PC-9 (cell line): ENCODE measurements at regions of chr16 and their contacts with region 1.

Region 1: GRCh38 chr16:90022209-90023064 is 3.2 kb upstream of the DBNDD1 start:
- DNase-seq: peak; percentile 78 to 94
- H3K4me3 ChIP-seq: peak overlapping the region; percentile 95
- H3K27ac ChIP-seq: peak overlapping the region; percentile 25
- H3K4me1 ChIP-seq: peaks cover 29% of the 10 kb centered on the region
- H3K27me3 ChIP-seq: no peaks in the 10 kb centered on the region
- CTCF ChIP-seq: no peak

Region 2: GRCh38 chr16:89815639-89816348 is 206.6 kb before region 1 on chr16:
- CTCF ChIA-PET with region 1: no interaction called
- POLR2A ChIA-PET with region 1: no interaction called
- intact Hi-C with region 1: no loop called
- DNase-seq: peak in 1 of 2 experiments; percentile 28
- H3K4me3 ChIP-seq: peak overlapping the region; percentile 75
- H3K27ac ChIP-seq: no peak overlapping the region
- H3K4me1 ChIP-seq: peaks cover 18% of the 10 kb centered on the region
- H3K27me3 ChIP-seq: no peaks in the 10 kb centered on the region
- CTCF ChIP-seq: no peak

Region 3: GRCh38 chr16:89842471-89843408 is 179.7 kb before region 1 on chr16:
- CTCF ChIA-PET with region 1: no interaction called
- POLR2A ChIA-PET with region 1: interaction called, 29 read pairs
- intact Hi-C with region 1: no loop called
- DNase-seq: peak in 1 of 2 experiments; percentile 63
- H3K4me3 ChIP-seq: no peak overlapping the region
- H3K27ac ChIP-seq: no peak overlapping the region
- H3K4me1 ChIP-seq: peaks cover 11% of the 10 kb centered on the region
- H3K27me3 ChIP-seq: no peaks in the 10 kb centered on the region
- CTCF ChIP-seq: no peak

Region 4: DNA sequence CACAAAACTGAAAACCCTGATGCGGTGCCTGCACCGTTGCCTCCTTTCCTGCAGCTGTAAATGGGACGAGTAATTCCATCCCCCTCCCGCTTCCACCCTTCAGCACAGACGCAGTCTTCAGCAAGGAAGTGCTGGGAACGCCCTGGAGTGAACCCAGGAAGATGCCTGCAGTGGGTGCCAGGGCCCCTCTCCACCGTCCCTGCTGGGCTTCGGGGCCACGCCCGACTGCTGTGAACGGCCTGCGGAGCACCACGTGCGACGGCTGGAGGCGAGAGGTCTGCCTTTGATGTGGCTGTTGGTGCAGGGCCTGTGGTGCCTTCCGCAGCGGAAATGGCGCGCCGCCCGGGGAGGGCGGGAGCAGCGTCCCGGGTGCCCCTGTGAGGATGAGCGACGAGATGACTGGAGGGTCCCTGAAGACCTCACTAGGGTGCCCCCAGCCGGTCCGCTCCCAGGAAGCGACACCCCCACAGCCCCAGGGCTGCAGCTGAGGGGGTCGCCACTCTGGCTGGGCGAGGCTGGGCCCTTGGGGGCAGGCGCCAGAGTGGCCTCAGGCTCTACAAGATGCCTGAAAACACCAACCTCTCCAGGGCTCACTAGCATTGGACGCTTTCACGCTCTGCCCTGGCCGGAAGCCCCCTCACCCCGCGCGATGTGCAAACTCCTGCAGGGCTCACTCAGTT is 104.5 kb before region 1 on chr16:
- CTCF ChIA-PET with region 1: interaction called, 3 read pairs
- POLR2A ChIA-PET with region 1: interaction called, 9 read pairs
- intact Hi-C with region 1: loop called (anchors 5 kb)
- DNase-seq: peak; percentile 86 to 97
- H3K4me3 ChIP-seq: no peak overlapping the region; the same call in 1 of the 2 replicates
- H3K27ac ChIP-seq: no peak overlapping the region
- H3K4me1 ChIP-seq: peaks cover 36% of the 10 kb centered on the region
- H3K27me3 ChIP-seq: no peaks in the 10 kb centered on the region
- CTCF ChIP-seq: no peak

Region 5: GRCh38 chr16:89972244-89973234 is 49.9 kb before region 1 on chr16:
- CTCF ChIA-PET with region 1: no interaction called
- POLR2A ChIA-PET with region 1: interaction called, 5 read pairs
- intact Hi-C with region 1: loop called (anchors 2 kb)
- DNase-seq: peak; percentile 75 to 94
- H3K4me3 ChIP-seq: peak overlapping the region; percentile 98
- H3K27ac ChIP-seq: peak overlapping the region; percentile 74
- H3K4me1 ChIP-seq: peaks cover 22% of the 10 kb centered on the region
- H3K27me3 ChIP-seq: no peaks in the 10 kb centered on the region
- CTCF ChIP-seq: no peak

Region 6: DNA sequence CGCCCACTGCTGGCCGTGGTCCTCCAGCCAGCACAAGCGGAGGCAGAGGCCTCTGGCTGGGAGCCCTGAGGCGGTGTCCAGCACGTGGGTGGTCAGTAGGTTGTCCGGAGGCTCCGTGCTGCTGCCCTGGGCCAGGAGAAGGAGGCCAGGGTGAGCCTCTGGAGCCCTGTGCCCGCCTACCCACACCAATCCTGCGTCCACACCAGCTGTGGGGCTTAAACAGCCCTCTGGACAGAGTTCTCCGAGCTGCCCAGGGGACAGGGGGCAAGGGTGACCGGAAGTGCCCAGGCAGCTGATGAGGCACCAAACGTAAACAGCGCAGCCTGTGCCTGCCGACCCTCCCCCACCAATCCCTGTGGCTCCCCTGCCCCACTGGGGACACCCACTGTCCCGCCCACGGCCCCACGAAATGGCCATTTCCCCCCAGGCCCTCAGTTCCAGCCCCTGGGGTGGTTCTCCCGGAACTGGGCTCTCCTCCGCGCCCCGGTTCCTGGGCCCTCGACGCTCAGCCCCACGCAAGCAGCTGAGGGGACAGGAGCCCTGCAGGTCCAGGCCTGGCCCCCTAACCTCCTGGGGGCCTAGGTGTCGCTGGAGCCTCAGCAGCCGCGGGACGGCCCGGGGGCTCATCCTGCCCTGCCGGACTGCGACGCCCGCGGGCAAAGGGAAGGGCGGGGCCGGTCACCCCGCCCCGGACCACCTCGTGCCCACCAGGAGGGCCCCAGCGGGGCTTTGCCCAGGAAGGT is 24.7 kb after region 1 on chr16:
- CTCF ChIA-PET with region 1: interaction called, 6 read pairs
- POLR2A ChIA-PET with region 1: no interaction called
- intact Hi-C with region 1: loop called (anchors 2 kb)
- DNase-seq: peak; percentile 58 to 80
- H3K4me3 ChIP-seq: peak overlapping the region; percentile 77
- H3K27ac ChIP-seq: no peak overlapping the region
- H3K4me1 ChIP-seq: peaks cover 34% of the 10 kb centered on the region
- H3K27me3 ChIP-seq: no peaks in the 10 kb centered on the region
- CTCF ChIP-seq: no peak

Region 7: DNA sequence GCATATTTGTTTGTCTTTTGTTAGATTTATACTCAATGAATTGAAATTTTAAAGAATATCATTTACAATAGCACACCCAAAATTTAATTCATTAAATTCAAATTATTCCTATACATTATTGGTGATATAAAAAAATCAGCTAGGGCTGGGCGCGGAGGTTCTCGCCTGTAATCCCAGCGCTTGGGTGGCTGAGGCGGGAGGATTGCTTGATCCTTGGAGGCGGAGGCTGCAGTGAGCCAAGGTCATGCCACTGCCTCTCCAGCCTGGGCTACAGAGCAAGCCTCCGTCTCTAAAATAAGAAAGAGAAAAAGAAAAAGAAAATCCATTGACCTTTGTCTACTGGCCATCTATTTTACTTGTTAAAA is 59.2 kb after region 1 on chr16:
- CTCF ChIA-PET with region 1: interaction called, 3 read pairs
- POLR2A ChIA-PET with region 1: no interaction called
- intact Hi-C with region 1: loop called (anchors 2 kb)
- DNase-seq: no peak
- H3K4me3 ChIP-seq: peak overlapping the region; percentile 86; the same call in 1 of the 2 replicates
- H3K27ac ChIP-seq: no peak overlapping the region
- H3K4me1 ChIP-seq: peaks cover 8% of the 10 kb centered on the region
- H3K27me3 ChIP-seq: no peaks in the 10 kb centered on the region
- CTCF ChIP-seq: no peak